Dendritic cell treated with granulocyte-macrophage colony-stimulating factor and Interleukin-4, amounts not matched to agents 40 ng/mL and 50 ng/mL, for 4 days (primary cell): ENCODE measurements at regions of chr10 and their contacts with region 1.

Region 1: DNA sequence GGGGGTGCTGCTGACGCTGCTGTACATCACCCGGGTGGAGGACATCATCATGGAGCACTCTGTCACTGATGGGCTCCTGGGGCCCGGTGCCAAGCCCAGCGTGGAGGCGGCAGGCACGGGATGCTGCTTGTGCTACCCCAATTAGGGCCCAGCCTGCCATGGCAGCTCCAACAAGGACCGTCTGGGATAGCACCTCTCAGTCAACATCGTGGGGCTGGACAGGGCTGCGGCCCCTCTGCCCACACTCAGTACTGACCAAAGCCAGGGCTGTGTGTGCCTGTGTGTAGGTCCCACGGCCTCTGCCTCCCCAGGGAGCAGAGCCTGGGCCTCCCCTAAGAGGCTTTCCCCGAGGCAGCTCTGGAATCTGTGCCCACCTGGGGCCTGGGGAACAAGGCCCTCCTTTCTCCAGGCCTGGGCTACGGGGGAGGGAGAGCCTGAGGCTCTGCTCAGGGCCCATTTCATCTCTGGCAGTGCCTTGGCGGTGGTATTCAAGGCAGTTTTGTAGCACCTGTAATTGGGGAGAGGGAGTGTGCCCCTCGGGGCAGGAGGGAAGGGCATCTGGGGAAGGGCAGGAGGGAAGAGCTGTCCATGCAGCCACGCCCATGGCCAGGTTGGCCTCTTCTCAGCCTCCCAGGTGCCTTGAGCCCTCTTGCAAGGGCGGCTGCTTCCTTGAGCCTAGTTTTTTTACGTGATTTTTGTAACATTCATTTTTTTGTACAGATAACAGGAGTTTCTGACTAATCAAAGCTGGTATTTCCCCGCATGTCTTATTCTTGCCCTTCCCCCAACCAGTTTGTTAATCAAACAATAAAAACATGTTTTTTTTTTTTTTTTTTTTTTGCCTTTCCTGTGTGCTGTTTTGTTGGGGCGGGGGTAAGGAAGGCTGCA is 55.8 kb downstream of the TSPAN15 start:
- H3K4me3 Mint-ChIP-seq: peak overlapping the region; percentile 44
- H3K27ac Mint-ChIP-seq: peak overlapping the region; percentile 28
- H3K4me1 Mint-ChIP-seq: peaks cover 8% of the 10 kb centered on the region
- H3K27me3 Mint-ChIP-seq: peaks cover 40% of the 10 kb centered on the region

Region 2: GRCh38 chr10:68901104-68901927 is 605.8 kb before region 1 on chr10 and contains the start of gene DDX50:
- intact Hi-C with region 1: no loop called
- H3K4me3 Mint-ChIP-seq: peak within 1 kb of the TSS; percentile 97
- H3K27ac Mint-ChIP-seq: peak within 1 kb of the TSS; percentile 99
- H3K4me1 Mint-ChIP-seq: peaks cover 34% of the 10 kb centered on the region
- H3K27me3 Mint-ChIP-seq: peaks cover 8% of the 10 kb centered on the region

Region 3: GRCh38 chr10:69237528-69238159 is 269.4 kb before region 1 on chr10:
- intact Hi-C with region 1: loop called (anchors 5 kb)
- H3K4me3 Mint-ChIP-seq: no peak overlapping the region
- H3K27ac Mint-ChIP-seq: no peak overlapping the region
- H3K4me1 Mint-ChIP-seq: no peaks in the 10 kb centered on the region
- H3K27me3 Mint-ChIP-seq: no peaks in the 10 kb centered on the region

Region 4: GRCh38 chr10:69408318-69409175 is 98.5 kb before region 1 on chr10:
- intact Hi-C with region 1: loop called (anchors 5 kb)
- H3K4me3 Mint-ChIP-seq: peak overlapping the region; percentile 76
- H3K27ac Mint-ChIP-seq: peak overlapping the region; percentile 89
- H3K4me1 Mint-ChIP-seq: peaks cover 37% of the 10 kb centered on the region
- H3K27me3 Mint-ChIP-seq: peaks cover 6% of the 10 kb centered on the region

Region 5: GRCh38 chr10:69425511-69426298 is 81.4 kb before region 1 on chr10:
- intact Hi-C with region 1: loop called (anchors 1 kb)
- H3K4me3 Mint-ChIP-seq: no peak overlapping the region
- H3K27ac Mint-ChIP-seq: peak overlapping the region; percentile 53
- H3K4me1 Mint-ChIP-seq: peaks cover 41% of the 10 kb centered on the region
- H3K27me3 Mint-ChIP-seq: peaks cover 8% of the 10 kb centered on the region

Region 6: DNA sequence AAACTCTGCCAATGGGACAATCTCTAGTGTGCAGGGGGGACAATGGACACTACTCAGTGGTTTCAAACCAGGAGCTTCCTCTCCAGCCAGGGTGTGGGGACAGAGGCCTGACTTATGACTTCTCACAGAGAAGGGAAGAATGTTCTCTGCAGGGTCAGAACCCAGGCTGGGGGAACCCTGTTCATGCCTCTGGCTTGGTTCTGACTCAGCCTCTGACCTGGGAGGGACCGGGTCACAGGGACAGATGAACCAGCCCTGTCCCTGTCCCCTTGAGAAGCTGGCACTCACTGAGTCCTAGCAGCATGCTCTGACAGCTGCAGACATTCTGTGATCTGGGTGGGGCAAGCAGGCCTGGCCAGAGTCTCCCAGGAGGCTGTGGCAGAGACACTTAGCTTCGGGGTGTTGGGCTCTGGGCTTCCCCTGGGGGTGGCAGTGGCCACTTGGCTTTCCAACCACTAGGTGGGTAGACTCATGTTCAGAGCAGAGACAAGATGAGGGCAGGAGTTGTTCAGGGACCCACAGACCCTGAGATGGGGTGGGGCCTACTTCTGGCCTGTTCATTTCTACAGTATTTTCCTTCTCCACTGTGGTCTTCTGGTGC is 42.2 kb before region 1 on chr10:
- intact Hi-C with region 1: loop called (anchors 5 kb)
- H3K4me3 Mint-ChIP-seq: peak overlapping the region; percentile 17
- H3K27ac Mint-ChIP-seq: peak overlapping the region; percentile 81
- H3K4me1 Mint-ChIP-seq: peaks cover 56% of the 10 kb centered on the region
- H3K27me3 Mint-ChIP-seq: peaks cover 5% of the 10 kb centered on the region

Region 7: GRCh38 chr10:69567920-69568319 is 60.8 kb after region 1 on chr10:
- intact Hi-C with region 1: no loop called
- H3K4me3 Mint-ChIP-seq: no peak overlapping the region
- H3K27ac Mint-ChIP-seq: no peak overlapping the region
- H3K4me1 Mint-ChIP-seq: peaks cover 7% of the 10 kb centered on the region
- H3K27me3 Mint-ChIP-seq: peaks cover 79% of the 10 kb centered on the region